Ascending aorta (tissue), 2 donors: ENCODE measurements at regions of chr20 and their contacts with region 1.

Region 1: GRCh38 chr20:3820048-3820900 is at the start of gene AP5S1:
- DNase-seq: peak; percentile 91 to 99
- H3K4me3 ChIP-seq: peak within 1 kb of the TSS; percentile 65 to 93
- H3K27ac ChIP-seq: peak within 1 kb of the TSS; percentile 97
- H3K4me1 ChIP-seq: peaks cover 3 to 16% of the 10 kb centered on the region in 2 donors
- H3K27me3 ChIP-seq: no peaks in the 10 kb centered on the region
- CTCF ChIP-seq: peak; percentile 96 to 100 (median 100)
- total RNA-seq, gene AP5S1: 38.5 TPM

Region 2: GRCh38 chr20:3767427-3768341 is 52.6 kb before region 1 on chr20 and contains the start of gene ADISSP:
- intact Hi-C with region 1: loop called (anchors 1 kb)
- DNase-seq: peak; percentile 95 to 99
- H3K4me3 ChIP-seq: peak within 1 kb of the TSS; percentile 78
- H3K27ac ChIP-seq: peak within 1 kb of the TSS; percentile 85 to 87
- H3K4me1 ChIP-seq: peaks cover 5 to 11% of the 10 kb centered on the region in 2 donors
- H3K27me3 ChIP-seq: no peaks in the 10 kb centered on the region
- CTCF ChIP-seq: peak in 1 of 3 experiments; percentile 7
- total RNA-seq, gene ADISSP: 48.4 TPM

Region 3: GRCh38 chr20:3786665-3787323 is 33.5 kb before region 1 on chr20 and contains the start of gene CENPB:
- intact Hi-C with region 1: loop called (anchors 1 kb)
- DNase-seq: peak; percentile 47 to 93
- H3K4me3 ChIP-seq: peak within 1 kb of the TSS; percentile 67 to 94
- H3K27ac ChIP-seq: peak within 1 kb of the TSS; percentile 82 to 89
- H3K4me1 ChIP-seq: peaks cover 20 to 25% of the 10 kb centered on the region in 2 donors
- H3K27me3 ChIP-seq: no peaks in the 10 kb centered on the region
- CTCF ChIP-seq: peak; percentile 63 to 73 (median 68)
- total RNA-seq, gene CENPB: 173 TPM

Region 4: DNA sequence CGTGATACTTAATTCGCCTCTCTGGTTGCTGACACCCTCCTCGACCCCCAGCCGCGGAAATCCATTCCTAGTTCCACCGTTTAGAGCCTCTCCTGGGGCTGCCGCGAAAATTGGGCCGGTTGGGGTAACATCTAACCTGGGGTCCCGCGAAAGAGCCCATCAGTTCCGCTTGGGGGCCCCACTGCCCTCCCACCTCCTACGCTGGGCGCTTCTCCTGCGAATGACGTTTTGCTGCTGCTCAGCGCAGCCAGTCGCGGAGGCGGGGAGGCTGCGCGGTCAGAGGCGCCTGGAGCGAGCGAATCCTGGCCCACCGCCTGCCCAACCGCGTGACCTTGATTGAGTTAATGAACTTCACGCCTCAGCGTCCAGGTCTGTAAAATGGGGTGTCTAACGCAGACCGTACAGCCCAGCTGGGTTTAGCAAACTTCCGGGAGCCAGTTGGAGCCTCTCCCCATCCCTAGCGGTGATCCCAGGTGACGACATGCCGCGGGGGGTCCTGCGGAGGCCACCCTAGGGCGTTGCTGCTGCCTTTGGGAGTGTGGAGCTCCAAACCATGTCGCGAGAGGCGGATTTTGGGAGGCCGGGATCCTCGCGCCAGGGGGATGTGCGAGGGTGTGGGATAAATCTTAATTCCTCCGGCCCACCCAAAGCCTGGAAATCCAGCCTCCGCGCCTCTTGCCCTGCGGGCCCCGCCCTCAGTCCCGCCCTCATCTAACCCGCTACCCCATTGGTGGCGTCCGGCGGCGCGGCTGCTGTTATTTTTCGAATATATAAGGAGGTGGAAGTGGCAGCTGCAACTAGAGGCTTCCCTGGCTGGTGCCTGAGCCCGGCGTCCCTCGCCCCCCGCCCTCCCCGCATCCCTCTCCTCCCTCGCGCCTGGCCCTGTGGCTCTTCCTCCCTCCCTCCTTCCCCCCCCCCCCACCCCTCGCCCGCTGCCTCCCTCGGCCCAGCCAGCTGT is 24.5 kb before region 1 on chr20 and contains the start of gene CDC25B:
- intact Hi-C with region 1: loop called (anchors 1 kb)
- DNase-seq: peak; percentile 85 to 98
- H3K4me3 ChIP-seq: peak within 1 kb of the TSS; percentile 66 to 74
- H3K27ac ChIP-seq: peak within 1 kb of the TSS; percentile 91 to 96
- H3K4me1 ChIP-seq: peaks cover 14 to 27% of the 10 kb centered on the region in 2 donors
- H3K27me3 ChIP-seq: no peaks in the 10 kb centered on the region
- CTCF ChIP-seq: peak; percentile 36 to 78 (median 45)
- total RNA-seq, gene CDC25B: 60.6 TPM

Region 5: DNA sequence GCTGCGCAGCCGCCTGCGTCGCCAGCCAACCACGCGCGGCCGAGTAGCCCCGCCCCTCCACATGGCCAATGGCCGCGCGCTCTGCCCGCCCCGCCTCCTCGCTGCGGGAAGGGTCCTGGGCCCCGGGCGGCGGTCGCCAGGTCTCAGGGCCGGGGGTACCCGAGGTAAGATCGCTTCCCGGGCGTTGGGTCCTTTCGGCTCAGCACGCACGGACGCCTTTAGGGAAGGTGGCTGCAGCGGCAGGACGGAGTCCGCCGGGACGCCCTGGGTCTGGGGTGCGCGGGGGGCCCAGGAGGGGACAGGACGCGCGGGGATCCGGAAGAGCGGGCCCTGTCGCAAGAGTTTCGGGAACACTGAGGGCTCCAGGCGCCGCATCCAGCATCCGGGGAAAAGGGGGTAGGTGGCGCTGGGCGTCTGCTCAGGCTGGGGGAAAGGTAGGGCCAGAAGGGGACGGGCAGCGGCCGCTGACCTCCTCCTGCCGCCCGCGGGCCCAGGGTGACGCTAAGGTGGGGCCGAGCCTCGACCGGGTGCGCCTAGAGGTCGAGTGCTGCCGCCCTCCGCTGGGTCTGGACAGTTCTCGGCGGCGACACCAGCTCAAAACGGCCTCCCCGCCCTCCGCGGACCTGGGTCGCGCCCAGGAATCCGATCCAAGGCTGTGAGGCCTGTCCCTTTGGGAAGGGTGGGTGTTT is 26.6 kb after region 1 on chr20 and contains the start of gene MAVS:
- intact Hi-C with region 1: loop called (anchors 1 kb)
- DNase-seq: peak; percentile 35 to 91
- H3K4me3 ChIP-seq: peak within 1 kb of the TSS; percentile 89 to 98
- H3K27ac ChIP-seq: peak within 1 kb of the TSS; percentile 93 to 94
- H3K4me1 ChIP-seq: peaks cover 6 to 15% of the 10 kb centered on the region in 2 donors
- H3K27me3 ChIP-seq: no peaks in the 10 kb centered on the region
- CTCF ChIP-seq: no peak
- total RNA-seq, gene MAVS: 35.2 TPM

Region 6: GRCh38 chr20:3888622-3889488 is 68.6 kb after region 1 on chr20 and contains the start of gene PANK2:
- intact Hi-C with region 1: loop called (anchors 1 kb)
- DNase-seq: peak; percentile 98 to 100
- H3K4me3 ChIP-seq: peak within 1 kb of the TSS; percentile 97 to 99
- H3K27ac ChIP-seq: peak within 1 kb of the TSS; percentile 96 to 99
- H3K4me1 ChIP-seq: peaks cover 4 to 30% of the 10 kb centered on the region in 2 donors
- H3K27me3 ChIP-seq: no peaks in the 10 kb centered on the region
- CTCF ChIP-seq: peak; percentile 64 to 69 (median 67)
- total RNA-seq, gene PANK2: 81.1 TPM